ENCODE measurements at regions of chr12 and their contacts with region 1.

Region 1: GRCh38 chr12:47963340-47964040 is at the start of gene TMEM106C:
- DNase-seq: peak; percentile 93 to 97
- H3K4me3 ChIP-seq: peak within 1 kb of the TSS; percentile 77
- H3K4me3 Mint-ChIP-seq: peak within 1 kb of the TSS; percentile 100
- H3K27ac Mint-ChIP-seq: peak within 1 kb of the TSS; percentile 97
- H3K4me1 ChIP-seq: no peaks in the 10 kb centered on the region
- H3K4me1 Mint-ChIP-seq: peaks cover 24% of the 10 kb centered on the region
- H3K27me3 ChIP-seq: no peaks in the 10 kb centered on the region
- H3K27me3 Mint-ChIP-seq: no peaks in the 10 kb centered on the region
- CTCF ChIP-seq: peak; percentile 98 to 99
- total RNA-seq, gene TMEM106C: 247 and 281 TPM in 2 replicates

Region 2: GRCh38 chr12:47870175-47870781 is 93.2 kb before region 1 on chr12:
- CTCF ChIA-PET with region 1: interaction called, 3 read pairs
- POLR2A ChIA-PET with region 1: no interaction called
- intact Hi-C with region 1: loop called (anchors 5 kb)
- DNase-seq: peak; percentile 75 to 78
- H3K4me3 ChIP-seq: no peak overlapping the region
- H3K4me3 Mint-ChIP-seq: no peak overlapping the region
- H3K27ac Mint-ChIP-seq: no peak overlapping the region
- H3K4me1 ChIP-seq: no peaks in the 10 kb centered on the region
- H3K4me1 Mint-ChIP-seq: no peaks in the 10 kb centered on the region
- H3K27me3 ChIP-seq: no peaks in the 10 kb centered on the region
- H3K27me3 Mint-ChIP-seq: no peaks in the 10 kb centered on the region
- CTCF ChIP-seq: peak; percentile 76 to 92

Region 3: GRCh38 chr12:47889040-47889439 is 74.5 kb before region 1 on chr12:
- CTCF ChIA-PET with region 1: no interaction called
- POLR2A ChIA-PET with region 1: no interaction called
- intact Hi-C with region 1: no loop called
- DNase-seq: no peak
- H3K4me3 ChIP-seq: no peak overlapping the region
- H3K4me3 Mint-ChIP-seq: no peak overlapping the region
- H3K27ac Mint-ChIP-seq: no peak overlapping the region
- H3K4me1 ChIP-seq: peaks cover 4% of the 10 kb centered on the region; the same call in 1 of the 2 replicates
- H3K4me1 Mint-ChIP-seq: peaks cover 6% of the 10 kb centered on the region
- H3K27me3 ChIP-seq: no peaks in the 10 kb centered on the region
- H3K27me3 Mint-ChIP-seq: no peaks in the 10 kb centered on the region
- CTCF ChIP-seq: no peak

Region 4: GRCh38 chr12:48001505-48002413 is 38.3 kb after region 1 on chr12:
- CTCF ChIA-PET with region 1: interaction called, 3 read pairs
- POLR2A ChIA-PET with region 1: no interaction called
- intact Hi-C with region 1: loop called (anchors 1 kb)
- DNase-seq: peak; percentile 75
- H3K4me3 ChIP-seq: peak overlapping the region; percentile 50
- H3K4me3 Mint-ChIP-seq: peak overlapping the region; percentile 95
- H3K27ac Mint-ChIP-seq: peak overlapping the region; percentile 92
- H3K4me1 ChIP-seq: peaks cover 23% of the 10 kb centered on the region
- H3K4me1 Mint-ChIP-seq: peaks cover 8% of the 10 kb centered on the region
- H3K27me3 ChIP-seq: no peaks in the 10 kb centered on the region
- H3K27me3 Mint-ChIP-seq: no peaks in the 10 kb centered on the region
- CTCF ChIP-seq: no peak

Region 5: GRCh38 chr12:48061948-48062719 is 98.6 kb after region 1 on chr12:
- CTCF ChIA-PET with region 1: interaction called, 6 read pairs
- POLR2A ChIA-PET with region 1: no interaction called
- intact Hi-C with region 1: loop called (anchors 1 kb)
- DNase-seq: peak in 1 of 2 experiments; percentile 62
- H3K4me3 ChIP-seq: no peak overlapping the region
- H3K4me3 Mint-ChIP-seq: no peak overlapping the region
- H3K27ac Mint-ChIP-seq: no peak overlapping the region
- H3K4me1 ChIP-seq: no peaks in the 10 kb centered on the region
- H3K4me1 Mint-ChIP-seq: no peaks in the 10 kb centered on the region
- H3K27me3 ChIP-seq: no peaks in the 10 kb centered on the region
- H3K27me3 Mint-ChIP-seq: no peaks in the 10 kb centered on the region
- CTCF ChIP-seq: peak; percentile 49 to 62